CD8-positive, alpha-beta T cell (primary cell): ENCODE measurements at regions of chr12 and their contacts with region 1.

Region 1: DNA sequence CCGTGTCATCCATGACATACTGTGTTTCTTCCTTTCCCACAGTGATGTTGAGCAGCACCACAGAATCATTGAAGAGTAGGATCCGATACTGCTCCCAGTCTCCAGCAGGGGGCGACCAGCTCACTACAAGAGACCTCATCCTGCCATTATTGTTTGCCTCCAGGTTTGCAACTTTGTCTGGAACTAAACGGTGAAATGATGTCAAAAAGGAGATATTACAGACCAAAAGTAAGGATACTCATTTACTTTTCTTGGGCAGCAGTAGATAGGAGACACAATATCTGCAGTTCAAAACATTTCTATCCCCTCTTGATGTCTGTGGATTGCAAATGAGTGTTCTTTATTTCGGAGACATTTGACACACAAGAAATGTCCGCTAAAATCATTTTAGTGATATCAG is 47.2 kb downstream of the PTPRB start:
- DNase-seq: peak in 8 of 9 experiments; percentile 8 to 58 (median 52)
- ATAC-seq: no peak
- H3K4me3 ChIP-seq: no peak overlapping the region
- H3K4me3 Mint-ChIP-seq: no peak overlapping the region
- H3K27ac ChIP-seq: no peak overlapping the region
- H3K27ac Mint-ChIP-seq: no peak overlapping the region
- H3K4me1 ChIP-seq: no peaks in the 10 kb centered on the region
- H3K4me1 Mint-ChIP-seq: no peaks in the 10 kb centered on the region
- H3K27me3 ChIP-seq: no peaks in the 10 kb centered on the region
- H3K27me3 Mint-ChIP-seq: peaks cover 8% of the 10 kb centered on the region
- CTCF ChIP-seq: peak; percentile 60

Region 2: GRCh38 chr12:70628701-70629480 is 38.8 kb after region 1 on chr12:
- CTCF ChIA-PET with region 1: no interaction called
- POLR2A ChIA-PET with region 1: no interaction called
- intact Hi-C with region 1: no loop called
- DNase-seq: no peak
- ATAC-seq: no peak
- H3K4me3 ChIP-seq: no peak overlapping the region
- H3K4me3 Mint-ChIP-seq: no peak overlapping the region
- H3K27ac ChIP-seq: no peak overlapping the region
- H3K27ac Mint-ChIP-seq: no peak overlapping the region
- H3K4me1 ChIP-seq: no peaks in the 10 kb centered on the region
- H3K4me1 Mint-ChIP-seq: no peaks in the 10 kb centered on the region
- H3K27me3 ChIP-seq: no peaks in the 10 kb centered on the region
- H3K27me3 Mint-ChIP-seq: peaks cover 3% of the 10 kb centered on the region
- CTCF ChIP-seq: no peak

Region 3: DNA sequence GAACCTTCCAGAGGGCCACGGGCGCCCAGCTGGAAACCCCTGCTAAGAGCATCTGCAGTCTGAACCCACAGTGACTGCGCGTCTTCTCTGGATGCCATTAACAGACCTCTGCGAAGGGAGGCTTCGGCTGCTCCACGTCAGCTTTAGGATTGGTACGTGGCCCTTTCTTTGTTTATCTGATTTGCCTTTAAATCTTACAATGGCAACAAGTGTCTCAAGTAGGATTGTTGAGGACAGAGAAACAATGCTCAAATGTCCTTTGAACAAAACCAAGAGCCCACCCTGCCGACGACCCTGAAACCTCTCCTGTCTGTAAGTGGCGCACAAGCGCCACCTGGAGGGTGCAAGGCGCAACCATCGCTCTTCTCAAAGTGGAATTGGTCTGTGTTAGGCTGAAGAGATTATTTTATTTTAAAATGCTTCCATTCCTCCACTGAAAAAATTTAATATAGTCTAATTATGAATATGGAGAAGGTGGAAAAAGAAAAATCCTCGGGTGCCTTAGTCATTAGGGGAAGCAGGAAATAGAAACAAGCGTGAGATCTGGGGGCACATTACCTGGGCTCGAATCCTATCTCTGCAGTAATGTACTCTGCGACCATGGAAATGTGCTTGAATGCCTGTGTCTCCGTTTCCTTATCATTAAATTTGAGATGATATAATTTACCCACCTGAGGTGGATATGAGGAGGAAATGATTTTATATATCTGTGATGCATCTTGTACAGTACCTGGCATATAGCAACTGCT is 129.8 kb after region 1 on chr12:
- CTCF ChIA-PET with region 1: no interaction called
- POLR2A ChIA-PET with region 1: no interaction called
- intact Hi-C with region 1: loop called (anchors 2 to 5 kb)
- DNase-seq: peak in 7 of 9 experiments; percentile 2 to 53 (median 29)
- ATAC-seq: peak; percentile 48
- H3K4me3 ChIP-seq: no peak overlapping the region
- H3K4me3 Mint-ChIP-seq: peak overlapping the region; percentile 51
- H3K27ac ChIP-seq: no peak overlapping the region
- H3K27ac Mint-ChIP-seq: no peak overlapping the region
- H3K4me1 ChIP-seq: peaks cover 4% of the 10 kb centered on the region
- H3K4me1 Mint-ChIP-seq: peaks cover 9% of the 10 kb centered on the region
- H3K27me3 ChIP-seq: no peaks in the 10 kb centered on the region
- H3K27me3 Mint-ChIP-seq: peaks cover 12% of the 10 kb centered on the region
- CTCF ChIP-seq: peak; percentile 74